Heart right ventricle (tissue), 16 donors: ENCODE measurements at regions of chr7 and their contacts with region 1.

Region 1: DNA sequence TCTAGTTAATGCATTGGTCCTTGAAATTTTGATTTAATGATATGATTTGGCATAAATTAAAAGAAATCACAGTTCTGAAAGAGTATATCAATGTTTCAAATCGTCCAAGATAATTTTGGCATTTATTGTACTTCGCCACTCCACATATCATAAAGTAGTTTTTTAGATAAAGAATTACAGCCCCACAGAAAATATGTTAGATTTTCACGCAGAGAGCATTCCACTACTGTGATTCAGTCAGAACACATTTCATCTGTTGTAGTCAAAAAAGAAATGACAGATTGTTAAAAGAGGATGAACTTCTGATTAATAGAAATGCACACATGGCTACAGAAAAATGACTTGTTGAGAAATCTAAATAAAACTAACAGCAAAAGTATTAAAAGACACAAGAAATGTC is 1063.5 kb upstream of the LRRN3 start:
- DNase-seq: no peak
- ATAC-seq: no peak
- H3K4me3 ChIP-seq: no peak overlapping the region
- H3K27ac ChIP-seq: no peak overlapping the region
- H3K4me1 ChIP-seq: no peaks in the 10 kb centered on the region
- H3K27me3 ChIP-seq: no peaks in the 10 kb centered on the region
- CTCF ChIP-seq: no peak

Region 2: DNA sequence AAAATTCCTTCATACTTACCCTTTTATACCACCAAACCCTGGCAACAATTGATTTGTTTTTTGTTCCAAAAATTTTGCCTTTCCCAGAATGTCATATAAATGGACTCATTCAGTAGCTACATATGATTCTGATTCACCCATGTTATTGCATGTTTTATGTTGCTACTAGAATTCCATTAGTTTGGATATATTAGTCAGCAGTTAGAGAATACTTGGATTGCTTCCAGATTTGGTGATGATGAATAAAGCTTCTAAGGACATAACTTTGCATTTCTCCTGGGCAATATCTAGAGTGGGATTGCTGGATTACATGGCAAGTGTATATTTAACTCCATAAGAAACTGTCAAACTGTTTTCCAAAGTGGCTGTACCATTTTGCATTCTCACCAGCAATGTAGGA is 650.8 kb before region 1 on chr7:
- intact Hi-C with region 1: no loop called
- DNase-seq: no peak
- ATAC-seq: no peak
- H3K4me3 ChIP-seq: no peak overlapping the region
- H3K27ac ChIP-seq: no peak overlapping the region
- H3K4me1 ChIP-seq: no peaks in the 10 kb centered on the region
- H3K27me3 ChIP-seq: no peaks in the 10 kb centered on the region
- CTCF ChIP-seq: no peak

Region 3: DNA sequence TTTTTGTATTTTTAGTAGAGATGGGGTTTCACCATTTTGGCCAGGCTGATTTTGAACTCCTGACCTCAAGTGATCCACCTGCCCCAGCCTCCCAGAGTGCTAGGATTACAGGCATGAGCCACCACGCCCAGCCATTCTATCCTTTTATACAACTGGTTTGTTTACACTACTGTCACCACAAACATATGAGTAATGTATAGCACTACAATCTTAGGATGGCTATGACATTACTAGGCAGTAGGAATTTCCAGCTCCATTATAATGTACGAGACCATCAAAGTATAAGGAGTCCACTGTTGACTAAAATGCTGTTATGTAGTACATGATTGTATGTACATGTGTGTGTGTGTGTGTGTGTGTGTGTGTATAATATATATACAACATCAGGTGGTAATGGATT is 62.6 kb before region 1 on chr7:
- intact Hi-C with region 1: loop called in 1 of 10 experiments (anchors 10 kb)
- DNase-seq: no peak
- ATAC-seq: no peak
- H3K4me3 ChIP-seq: no peak overlapping the region
- H3K27ac ChIP-seq: no peak overlapping the region
- H3K4me1 ChIP-seq: no peaks in the 10 kb centered on the region
- H3K27me3 ChIP-seq: no peaks in the 10 kb centered on the region
- CTCF ChIP-seq: no peak

Region 4: GRCh38 chr7:110257673-110258072 is 230.3 kb after region 1 on chr7:
- intact Hi-C with region 1: no loop called
- DNase-seq: no peak
- ATAC-seq: no peak
- H3K4me3 ChIP-seq: no peak overlapping the region
- H3K27ac ChIP-seq: no peak overlapping the region
- H3K4me1 ChIP-seq: no peaks in the 10 kb centered on the region
- H3K27me3 ChIP-seq: no peaks in the 10 kb centered on the region
- CTCF ChIP-seq: no peak

Region 5: GRCh38 chr7:110808361-110808760 is 781.0 kb after region 1 on chr7:
- intact Hi-C with region 1: no loop called
- DNase-seq: no peak
- ATAC-seq: no peak
- H3K4me3 ChIP-seq: no peak overlapping the region
- H3K27ac ChIP-seq: no peak overlapping the region
- H3K4me1 ChIP-seq: no peaks in the 10 kb centered on the region
- H3K27me3 ChIP-seq: no peaks in the 10 kb centered on the region
- CTCF ChIP-seq: no peak